Breast epithelium (tissue), 4 donors: ENCODE measurements at regions of chr12 and their contacts with region 1.

Region 1: DNA sequence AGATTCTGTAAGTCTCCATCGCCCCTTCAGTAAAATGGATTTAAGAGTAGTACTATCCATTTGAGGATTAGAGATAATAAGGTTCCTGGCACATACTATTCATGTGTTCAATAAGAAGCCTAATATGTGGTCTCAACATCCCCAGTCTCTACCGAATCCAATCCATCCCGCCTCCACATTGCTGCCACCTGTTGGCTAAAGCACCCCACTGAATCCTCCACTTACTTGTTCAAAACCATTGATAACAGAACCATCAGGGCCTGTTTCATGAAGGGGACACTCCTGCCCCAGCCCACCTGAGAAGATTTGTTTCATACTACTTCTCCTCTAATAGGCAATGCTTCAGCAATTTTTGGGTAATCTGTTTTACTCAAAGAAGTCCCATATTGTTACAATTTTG is 147.5 kb downstream of the SLC2A13 start:
- DNase-seq: no peak
- H3K4me3 ChIP-seq: no peak overlapping the region
- H3K27ac ChIP-seq: no peak overlapping the region
- H3K4me1 ChIP-seq: no peaks in the 10 kb centered on the region
- H3K27me3 ChIP-seq: no peaks in the 10 kb centered on the region
- CTCF ChIP-seq: no peak
- POLR2A ChIP-seq: no peak

Region 2: DNA sequence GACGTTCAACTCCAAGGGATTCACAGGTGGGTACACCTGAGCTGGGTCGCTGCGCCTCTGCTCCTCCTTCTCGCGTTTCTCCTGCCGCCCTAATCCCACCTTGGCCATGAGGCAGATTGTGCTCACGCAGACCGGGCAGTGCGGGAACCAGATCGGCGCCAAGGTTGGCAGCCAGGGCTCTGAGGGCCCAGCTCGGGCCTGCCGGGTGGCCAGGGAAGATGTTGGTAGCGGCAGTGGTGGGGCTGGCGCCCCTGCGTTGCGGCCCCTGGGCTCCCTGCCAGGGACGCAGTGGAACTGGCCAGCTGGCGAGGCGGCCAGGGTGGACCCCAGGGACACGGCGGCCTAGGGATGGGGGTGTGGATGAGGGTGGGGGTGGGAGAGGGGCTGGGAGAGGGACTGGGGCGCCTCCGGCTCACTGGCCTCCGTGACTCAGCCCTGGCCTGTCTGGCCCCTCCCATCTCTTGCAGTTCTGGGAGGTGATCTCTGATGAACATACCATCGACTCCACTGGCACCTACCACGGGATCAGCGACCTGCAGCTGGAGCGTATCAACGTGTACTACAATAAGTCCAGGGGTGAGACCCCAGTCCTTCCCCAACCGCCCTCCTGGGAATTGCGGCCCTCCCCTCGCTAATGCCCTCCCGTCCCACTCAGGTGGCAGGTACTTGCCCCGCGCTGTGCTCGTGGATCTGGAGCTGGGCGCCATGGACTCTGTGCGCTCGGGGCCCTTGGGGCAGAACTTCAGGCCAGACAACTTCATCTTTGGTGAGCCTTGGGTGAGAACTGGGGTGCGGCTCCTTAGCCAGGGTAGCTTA is 1756.7 kb before region 1 on chr12:
- intact Hi-C with region 1: loop called (anchors 10 kb)
- DNase-seq: no peak
- H3K4me3 ChIP-seq: no peak overlapping the region
- H3K27ac ChIP-seq: no peak overlapping the region
- H3K4me1 ChIP-seq: no peaks in the 10 kb centered on the region
- H3K27me3 ChIP-seq: no peaks in the 10 kb centered on the region
- CTCF ChIP-seq: no peak
- POLR2A ChIP-seq: no peak

Region 3: GRCh38 chr12:39095636-39096330 is 862.6 kb before region 1 on chr12:
- intact Hi-C with region 1: no loop called
- DNase-seq: no peak
- H3K4me3 ChIP-seq: no peak overlapping the region
- H3K27ac ChIP-seq: no peak overlapping the region
- H3K4me1 ChIP-seq: no peaks in the 10 kb centered on the region
- H3K27me3 ChIP-seq: no peaks in the 10 kb centered on the region
- CTCF ChIP-seq: no peak
- POLR2A ChIP-seq: no peak

Region 4: GRCh38 chr12:41724216-41724615 is 1765.8 kb after region 1 on chr12:
- intact Hi-C with region 1: no loop called
- DNase-seq: no peak
- H3K4me3 ChIP-seq: no peak overlapping the region
- H3K27ac ChIP-seq: no peak overlapping the region
- H3K4me1 ChIP-seq: no peaks in the 10 kb centered on the region
- H3K27me3 ChIP-seq: no peaks in the 10 kb centered on the region
- CTCF ChIP-seq: no peak
- POLR2A ChIP-seq: no peak